ENCODE measurements at regions of chr6 and their contacts with region 1.

Region 1: DNA sequence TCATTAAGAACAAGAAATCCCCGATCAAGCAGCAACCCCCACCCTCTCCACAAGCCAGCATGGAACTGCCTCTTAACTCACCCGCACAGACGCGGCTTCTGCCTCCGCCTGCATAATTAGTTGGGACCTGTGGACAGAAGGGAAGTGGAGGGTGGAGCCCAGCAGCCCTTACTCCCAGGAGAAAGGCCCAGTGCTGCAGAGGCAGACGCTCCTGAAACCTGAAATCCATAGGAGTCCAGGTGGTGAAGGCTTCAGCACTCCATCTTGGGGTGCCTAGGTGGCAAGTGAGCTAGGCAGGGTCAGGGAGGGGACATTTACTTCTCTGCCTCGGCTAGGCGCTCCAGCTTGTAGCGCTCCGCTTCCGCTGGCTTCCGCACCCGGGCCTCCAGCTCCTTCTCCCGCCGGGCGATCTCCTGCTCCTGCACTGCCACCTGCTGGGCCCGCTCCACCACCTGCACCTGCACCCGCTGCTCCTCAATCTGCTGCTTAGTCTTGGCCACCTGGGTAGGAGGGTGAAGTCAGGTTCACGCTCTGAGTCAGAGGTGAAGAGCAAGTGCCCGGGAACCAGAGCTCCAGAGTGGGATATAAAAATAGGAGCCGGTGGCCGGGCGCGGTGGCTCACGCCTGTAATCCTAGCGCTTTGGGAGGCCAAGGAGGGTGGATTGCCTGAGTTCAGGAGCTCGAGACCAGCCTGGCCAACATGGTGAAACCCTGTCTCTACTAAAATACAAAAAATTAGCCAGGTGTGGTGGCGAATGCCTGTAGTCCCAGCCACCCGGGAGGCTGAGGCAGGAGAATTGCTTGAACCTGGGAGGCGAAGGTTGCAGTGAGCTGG is 10.7 kb downstream of the TUBB start:
- DNase-seq: peak; percentile 41
- H3K4me3 ChIP-seq: no peak overlapping the region
- H3K27ac ChIP-seq: no peak overlapping the region
- H3K4me1 ChIP-seq: peaks cover 17% of the 10 kb centered on the region
- H3K27me3 ChIP-seq: no peaks in the 10 kb centered on the region

Region 2: GRCh38 chr6:30424549-30424948 is 306.3 kb before region 1 on chr6:
- in situ Hi-C with region 1: no loop called
- DNase-seq: no peak
- H3K4me3 ChIP-seq: no peak overlapping the region
- H3K27ac ChIP-seq: no peak overlapping the region
- H3K4me1 ChIP-seq: no peaks in the 10 kb centered on the region
- H3K27me3 ChIP-seq: peaks cover 52% of the 10 kb centered on the region

Region 3: DNA sequence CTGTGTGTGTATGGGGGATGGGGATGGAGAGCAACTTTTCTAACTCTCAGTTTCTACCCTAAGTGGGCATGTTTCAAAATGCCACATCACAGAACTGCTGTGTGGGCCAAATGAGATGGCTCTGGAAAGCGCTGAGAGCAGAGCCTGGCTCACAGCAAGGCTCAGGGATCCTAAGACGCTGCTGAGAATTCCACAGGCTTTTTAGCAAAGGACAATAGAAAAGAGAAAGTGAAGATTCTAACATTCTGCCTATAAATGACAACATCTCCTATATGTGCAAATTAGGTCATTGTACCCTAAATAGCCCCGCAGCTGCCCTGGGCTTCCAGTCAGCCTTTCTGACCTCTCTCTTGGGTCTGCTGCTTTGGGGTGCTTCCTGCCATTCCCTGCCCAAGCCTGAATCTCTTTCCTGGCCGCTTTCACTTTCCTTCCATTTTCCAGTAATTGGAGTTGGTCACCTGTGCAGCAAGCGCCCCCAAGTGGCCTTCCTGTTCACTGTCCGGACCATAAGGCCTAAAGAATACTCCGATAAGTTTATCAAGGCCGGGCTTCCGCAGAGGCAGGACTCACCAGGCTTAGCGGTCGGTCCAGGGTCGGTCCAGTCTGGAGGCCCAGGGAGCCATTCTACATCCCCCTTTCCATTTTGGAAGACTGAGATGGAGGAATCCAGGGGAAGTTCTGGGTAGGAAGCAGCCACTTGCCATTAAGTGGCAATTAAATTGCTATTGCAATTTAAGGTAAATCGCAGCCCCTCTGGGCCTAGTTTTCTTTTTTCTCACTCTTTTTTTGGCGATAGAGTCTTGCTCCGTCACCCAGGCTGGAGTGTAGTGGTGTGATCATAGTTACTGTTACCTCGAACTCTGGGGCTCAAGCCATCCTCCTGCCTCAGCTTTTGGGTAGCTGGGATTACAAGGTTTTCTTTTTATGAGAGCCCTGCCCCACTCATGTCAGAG is 146.9 kb after region 1 on chr6:
- in situ Hi-C with region 1: loop called (anchors 10 kb)
- DNase-seq: peak; percentile 92
- H3K4me3 ChIP-seq: peak overlapping the region; percentile 67
- H3K27ac ChIP-seq: peak overlapping the region; percentile 70
- H3K4me1 ChIP-seq: peaks cover 8% of the 10 kb centered on the region; the same call in 1 of the 2 replicates
- H3K27me3 ChIP-seq: no peaks in the 10 kb centered on the region

Measured in GM23248 (cell line).